ENCODE measurements at regions of chr7 and their contacts with region 1.

Region 1: DNA sequence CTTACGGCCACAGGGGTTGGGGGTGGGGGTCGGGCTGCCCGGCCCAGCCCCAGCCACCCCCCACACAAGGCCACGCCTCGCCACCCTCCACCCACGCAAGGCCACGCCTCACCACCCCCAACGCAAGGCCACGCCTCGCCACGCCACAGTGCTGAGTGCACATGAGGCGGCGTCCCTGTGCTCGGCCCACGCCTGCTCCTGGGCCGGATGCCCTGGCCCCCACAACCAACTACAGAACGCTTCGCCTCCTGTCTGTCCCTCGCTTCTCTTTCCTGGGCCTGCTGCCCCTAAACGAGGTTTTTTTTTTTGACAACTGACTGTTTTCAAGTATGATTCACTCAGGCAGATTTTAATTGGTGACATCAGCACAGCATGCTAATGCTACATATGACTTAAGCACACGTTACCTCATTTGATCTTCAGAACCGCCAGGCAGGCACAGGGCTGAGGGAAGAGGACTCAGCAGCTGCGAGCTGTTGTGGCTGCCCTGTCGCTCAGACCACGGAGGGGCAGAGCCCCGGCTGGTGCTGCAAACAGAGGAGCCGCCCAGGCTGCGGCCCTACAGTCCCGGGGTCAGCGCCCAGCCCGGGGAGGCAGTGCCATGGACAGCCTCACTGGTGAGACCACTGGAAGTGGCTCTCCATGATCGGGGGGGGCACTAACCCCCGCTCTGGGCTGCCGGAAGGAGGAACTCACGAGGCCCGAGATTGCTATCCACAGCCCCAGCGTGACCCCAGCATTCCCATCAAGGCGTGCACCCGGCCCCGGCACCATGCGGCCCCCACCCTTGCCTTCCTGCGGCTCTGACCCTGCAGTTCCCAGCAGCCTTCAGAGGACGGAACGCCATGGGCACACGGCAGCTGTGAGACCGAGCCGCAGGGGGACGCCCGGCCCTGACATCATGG is 212.9 kb downstream of the MAD1L1 start:
- DNase-seq: peak; percentile 94 to 97 (median 96)
- H3K4me3 ChIP-seq: peak overlapping the region; percentile 6 to 66 (median 35)
- H3K4me3 Mint-ChIP-seq: peak overlapping the region; percentile 64 to 84
- H3K27ac ChIP-seq: peak overlapping the region; percentile 96 to 99
- H3K27ac Mint-ChIP-seq: peak overlapping the region; percentile 99 to 100 (median 100)
- H3K4me1 ChIP-seq: peaks cover 52 to 60% of the 10 kb centered on the region in 2 donors
- H3K4me1 Mint-ChIP-seq: peaks cover 58% of the 10 kb centered on the region
- H3K27me3 ChIP-seq: no peaks in the 10 kb centered on the region
- H3K27me3 Mint-ChIP-seq: no peaks in the 10 kb centered on the region
- CTCF ChIP-seq: no peak

Region 2: DNA sequence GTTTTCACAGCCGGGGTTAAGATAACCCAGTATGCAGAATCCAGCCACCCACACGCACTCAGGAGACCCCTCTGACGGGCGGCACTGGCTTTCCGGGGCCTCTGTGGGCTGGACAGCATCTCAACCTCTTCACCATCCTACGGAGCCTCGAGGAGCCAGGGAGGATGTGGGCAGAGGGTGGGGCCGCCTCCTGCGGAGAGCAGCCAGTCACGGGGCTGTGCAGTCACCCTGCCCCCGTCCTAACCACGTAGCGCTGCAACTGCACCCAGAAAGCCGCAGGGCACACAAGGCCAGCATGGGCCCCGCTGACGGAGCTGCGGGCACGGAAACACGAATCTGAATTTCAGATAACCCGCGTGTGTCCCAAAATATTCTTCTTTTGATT is 79.5 kb before region 1 on chr7:
- intact Hi-C with region 1: loop called (anchors 2 to 10 kb)
- DNase-seq: peak; percentile 87 to 93 (median 89)
- H3K4me3 ChIP-seq: peak overlapping the region; percentile 38 to 71 (median 57)
- H3K4me3 Mint-ChIP-seq: peak overlapping the region; percentile 88 to 94
- H3K27ac ChIP-seq: peak overlapping the region; percentile 62 to 95
- H3K27ac Mint-ChIP-seq: peak overlapping the region; percentile 90 to 99 (median 95)
- H3K4me1 ChIP-seq: peaks cover 46 to 65% of the 10 kb centered on the region in 2 donors
- H3K4me1 Mint-ChIP-seq: peaks cover 63% of the 10 kb centered on the region
- H3K27me3 ChIP-seq: no peaks in the 10 kb centered on the region
- H3K27me3 Mint-ChIP-seq: peaks cover 0 to 8% (median 4%) of the 10 kb centered on the region in 3 donors
- CTCF ChIP-seq: no peak

Region 3: GRCh38 chr7:1986366-1987083 is 33.3 kb before region 1 on chr7:
- intact Hi-C with region 1: no loop called
- DNase-seq: no peak
- H3K4me3 ChIP-seq: no peak overlapping the region
- H3K4me3 Mint-ChIP-seq: no peak overlapping the region
- H3K27ac ChIP-seq: no peak overlapping the region
- H3K27ac Mint-ChIP-seq: peak overlapping the region in 2 of 7 donors; percentile 57 to 59
- H3K4me1 ChIP-seq: no peaks in the 10 kb centered on the region
- H3K4me1 Mint-ChIP-seq: no peaks in the 10 kb centered on the region
- H3K27me3 ChIP-seq: no peaks in the 10 kb centered on the region
- H3K27me3 Mint-ChIP-seq: peaks cover 0 to 1% (median 0%) of the 10 kb centered on the region in 3 donors
- CTCF ChIP-seq: no peak

Region 4: GRCh38 chr7:2087744-2088143 is 67.9 kb after region 1 on chr7:
- intact Hi-C with region 1: no loop called
- DNase-seq: peak in 2 of 3 donors; percentile 18 to 42
- H3K4me3 ChIP-seq: no peak overlapping the region
- H3K4me3 Mint-ChIP-seq: peak overlapping the region in 1 of 2 donors; percentile 49
- H3K27ac ChIP-seq: no peak overlapping the region
- H3K27ac Mint-ChIP-seq: peak overlapping the region in 5 of 7 donors; percentile 55 to 82 (median 62)
- H3K4me1 ChIP-seq: peaks cover 9 to 14% of the 10 kb centered on the region in 2 donors
- H3K4me1 Mint-ChIP-seq: peaks cover 20% of the 10 kb centered on the region
- H3K27me3 ChIP-seq: no peaks in the 10 kb centered on the region
- H3K27me3 Mint-ChIP-seq: peaks cover 2 to 7% (median 2%) of the 10 kb centered on the region in 3 donors
- CTCF ChIP-seq: no peak

Region 5: DNA sequence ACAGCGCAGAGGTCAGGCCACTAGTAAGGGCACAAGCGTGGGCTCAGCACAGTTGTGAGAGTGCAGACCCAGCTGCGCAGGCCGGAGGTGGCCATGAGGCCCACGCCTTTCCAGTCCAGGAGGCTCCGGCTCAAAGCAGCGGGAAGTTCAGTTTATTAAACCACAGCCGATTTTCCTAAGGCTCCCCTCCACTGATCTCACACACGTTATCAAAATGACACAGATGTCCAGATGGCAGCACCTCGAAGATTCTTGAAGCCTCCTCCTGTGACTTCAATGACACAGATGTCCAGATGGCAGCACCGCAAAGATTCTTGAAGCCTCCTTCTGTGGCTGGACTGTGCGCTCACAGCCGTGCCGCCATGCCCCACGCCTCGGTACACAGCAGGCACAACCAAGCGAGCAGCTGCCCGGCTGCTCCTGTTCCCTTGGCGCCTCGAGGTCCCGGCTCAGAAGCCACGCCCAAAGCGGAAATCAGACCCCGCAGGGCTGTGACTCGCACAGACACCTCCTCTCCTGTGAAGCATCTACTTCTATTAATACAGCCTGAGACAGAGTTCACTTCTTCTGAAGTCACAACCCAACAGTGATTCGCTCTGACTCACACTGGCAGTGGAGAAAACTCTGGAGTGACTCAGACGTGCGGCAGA is 90.2 kb after region 1 on chr7:
- intact Hi-C with region 1: loop called in 1 of 2 experiments (anchors 5 kb)
- DNase-seq: peak; percentile 62 to 81 (median 68)
- H3K4me3 ChIP-seq: no peak overlapping the region
- H3K4me3 Mint-ChIP-seq: no peak overlapping the region
- H3K27ac ChIP-seq: peak overlapping the region in 1 of 2 donors; percentile 51
- H3K27ac Mint-ChIP-seq: peak overlapping the region; percentile 44 to 90 (median 84)
- H3K4me1 ChIP-seq: peaks cover 8 to 35% of the 10 kb centered on the region in 2 donors
- H3K4me1 Mint-ChIP-seq: peaks cover 55% of the 10 kb centered on the region
- H3K27me3 ChIP-seq: no peaks in the 10 kb centered on the region
- H3K27me3 Mint-ChIP-seq: peaks cover 2 to 8% (median 3%) of the 10 kb centered on the region in 3 donors
- CTCF ChIP-seq: no peak

Region 6: GRCh38 chr7:2195400-2196246 is 175.8 kb after region 1 on chr7:
- intact Hi-C with region 1: no loop called
- DNase-seq: no peak
- H3K4me3 ChIP-seq: no peak overlapping the region
- H3K4me3 Mint-ChIP-seq: no peak overlapping the region
- H3K27ac ChIP-seq: no peak overlapping the region
- H3K27ac Mint-ChIP-seq: peak overlapping the region in 2 of 7 donors; percentile 37 to 59
- H3K4me1 ChIP-seq: no peaks in the 10 kb centered on the region
- H3K4me1 Mint-ChIP-seq: no peaks in the 10 kb centered on the region
- H3K27me3 ChIP-seq: no peaks in the 10 kb centered on the region
- H3K27me3 Mint-ChIP-seq: peaks cover 0 to 1% (median 0%) of the 10 kb centered on the region in 3 donors
- CTCF ChIP-seq: no peak